Heart right ventricle (tissue), 16 donors: ENCODE measurements at regions of chr1 and their contacts with region 1.

Region 1: DNA sequence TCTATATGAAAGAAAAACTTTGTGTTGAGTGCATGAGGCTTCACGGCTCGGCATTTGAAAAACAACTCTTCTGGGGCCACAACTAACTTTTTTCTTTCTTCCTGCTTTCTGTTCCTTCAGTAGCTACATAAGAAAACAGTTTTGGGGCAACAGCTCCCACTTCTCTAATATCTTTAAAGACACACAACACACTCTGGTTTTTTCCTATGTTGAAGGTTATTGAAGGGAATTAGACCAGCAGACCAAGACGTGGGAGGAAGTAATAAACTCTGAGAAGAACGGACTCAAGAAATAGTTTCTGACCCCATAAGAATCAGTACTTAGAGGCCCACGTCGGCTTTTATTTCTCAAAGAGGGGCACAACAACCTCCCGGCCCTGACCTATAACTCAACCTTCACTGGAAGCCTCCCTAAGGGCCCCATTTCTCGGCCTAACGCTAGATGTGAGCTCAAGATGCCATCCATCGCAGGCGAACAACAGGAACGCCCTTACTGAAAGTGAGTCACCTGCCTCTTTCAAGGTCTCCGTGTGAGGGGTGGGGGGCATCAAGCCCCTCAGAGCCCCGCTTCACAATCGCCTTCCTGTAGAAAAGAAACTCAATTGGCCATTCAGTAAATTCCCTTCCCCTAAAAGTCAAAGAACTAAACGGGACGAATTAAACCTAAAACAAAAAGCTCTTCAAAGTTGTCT is 844 bp downstream of the ZMYM6 start:
- DNase-seq: peak in 1 of 2 donors; percentile 27
- ATAC-seq: peak in 7 of 8 donors; percentile 3 to 62 (median 44)
- H3K4me3 ChIP-seq: peak overlapping the region; percentile 55 to 89 (median 66)
- H3K27ac ChIP-seq: peak overlapping the region; percentile 80 to 97 (median 92)
- H3K4me1 ChIP-seq: peaks cover 0 to 27% (median 20%) of the 10 kb centered on the region in 9 donors
- H3K27me3 ChIP-seq: no peaks in the 10 kb centered on the region
- CTCF ChIP-seq: no peak

Region 2: DNA sequence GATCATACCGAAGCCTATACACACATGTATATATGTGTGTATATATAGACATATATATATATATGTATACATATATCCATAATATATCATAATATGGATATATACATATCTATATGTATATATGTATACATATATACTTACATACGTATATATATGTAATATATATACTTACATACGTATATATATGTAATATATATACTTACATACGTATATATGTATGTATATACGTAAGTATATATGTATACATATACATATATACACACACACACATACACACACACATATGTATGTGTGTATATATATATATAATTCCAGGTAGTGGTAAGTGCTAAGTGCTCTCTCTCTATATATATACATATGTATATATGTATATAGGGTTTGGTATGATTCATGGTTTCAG is 36.0 kb before region 1 on chr1:
- intact Hi-C with region 1: loop called in 1 of 10 experiments (anchors 5 kb)
- DNase-seq: no peak
- ATAC-seq: no peak
- H3K4me3 ChIP-seq: no peak overlapping the region
- H3K27ac ChIP-seq: no peak overlapping the region
- H3K4me1 ChIP-seq: no peaks in the 10 kb centered on the region
- H3K27me3 ChIP-seq: no peaks in the 10 kb centered on the region
- CTCF ChIP-seq: no peak

Region 3: DNA sequence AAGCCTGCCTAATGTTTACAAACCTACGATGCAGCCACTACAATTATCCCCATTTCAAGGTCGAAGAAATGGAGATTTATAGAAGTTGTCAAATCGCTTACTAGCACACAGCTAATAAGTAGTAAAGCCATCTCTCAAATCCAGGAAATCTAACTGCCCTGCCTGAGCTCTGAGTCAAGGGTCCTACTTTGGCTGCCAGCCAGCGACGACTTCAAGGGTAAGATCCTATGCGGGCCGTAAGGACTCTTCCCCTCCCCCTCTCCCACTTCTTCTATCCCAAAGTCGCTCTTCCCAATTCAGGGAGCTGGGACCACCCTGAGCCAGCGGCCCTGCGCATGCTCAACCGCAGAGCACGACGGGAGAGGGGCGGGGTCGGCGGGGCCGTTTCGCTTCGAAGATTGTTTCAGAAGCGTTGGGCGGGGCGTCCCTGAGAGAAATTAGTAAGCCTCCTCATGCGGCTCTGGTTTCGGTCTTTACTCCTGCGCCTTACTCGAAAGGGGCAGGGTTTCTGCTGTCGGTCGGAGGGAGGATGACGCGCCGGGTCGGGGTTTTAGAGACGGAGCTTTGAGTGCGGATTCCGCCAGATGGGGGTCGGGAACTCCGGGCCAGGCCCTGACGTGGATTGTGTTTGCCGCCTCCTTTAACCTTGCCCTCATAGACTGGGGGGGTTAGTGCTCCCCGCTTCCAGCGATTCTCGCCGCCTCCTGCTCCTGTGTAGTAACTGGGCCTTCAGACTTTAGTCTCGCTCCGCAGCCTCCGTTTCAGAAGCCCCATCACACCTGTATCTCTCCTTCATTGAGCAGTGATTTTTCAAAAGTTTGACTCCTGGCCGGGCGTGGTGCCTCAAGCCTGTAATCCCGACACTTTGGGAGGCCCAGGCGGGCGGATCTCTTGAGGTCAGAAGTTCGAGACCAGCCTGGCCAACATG is 48.4 kb after region 1 on chr1 and contains the start of gene ZMYM1:
- intact Hi-C with region 1: loop called in 2 of 10 experiments (anchors 2 to 5 kb)
- DNase-seq: peak; percentile 86 to 87
- ATAC-seq: peak; percentile 95 to 99 (median 98)
- H3K4me3 ChIP-seq: peak within 1 kb of the TSS; percentile 50 to 88 (median 77)
- H3K27ac ChIP-seq: peak within 1 kb of the TSS; percentile 41 to 93 (median 86)
- H3K4me1 ChIP-seq: peaks cover 4 to 18% (median 15%) of the 10 kb centered on the region in 9 donors
- H3K27me3 ChIP-seq: no peaks in the 10 kb centered on the region
- CTCF ChIP-seq: no peak
- total RNA-seq, gene ZMYM1: 4.2 to 11.0 (median 7.3) TPM

Region 4: DNA sequence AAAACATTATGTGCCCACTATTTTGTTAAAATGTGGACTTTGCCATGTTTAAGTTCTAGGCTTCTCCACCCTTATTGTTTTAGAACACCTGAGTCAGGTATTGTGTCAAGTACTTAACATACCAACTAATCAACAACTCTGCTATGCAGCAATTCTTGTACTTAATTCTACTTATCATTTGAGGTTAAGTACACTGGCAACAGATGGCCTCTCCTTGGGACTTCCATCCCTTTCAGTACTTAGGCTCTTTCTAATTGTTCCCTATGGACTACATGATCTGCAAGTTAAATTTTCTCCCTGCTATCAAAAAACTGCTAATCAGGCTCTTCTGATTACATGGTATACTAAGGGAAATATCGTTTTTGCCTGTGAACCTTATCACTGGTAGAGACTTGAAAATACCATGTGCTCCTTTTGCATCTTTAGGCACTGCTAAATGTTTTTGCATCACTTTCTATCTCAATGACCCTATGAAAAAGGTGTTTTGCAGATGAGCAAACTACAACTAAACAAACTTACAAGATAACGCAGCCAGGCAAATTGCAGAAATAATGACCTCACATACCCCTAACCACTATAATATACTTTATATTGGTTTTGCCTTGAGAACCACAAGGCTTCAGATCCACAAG is 143.1 kb after region 1 on chr1:
- intact Hi-C with region 1: loop called in 1 of 10 experiments (anchors 10 kb)
- DNase-seq: no peak
- ATAC-seq: no peak
- H3K4me3 ChIP-seq: no peak overlapping the region
- H3K27ac ChIP-seq: no peak overlapping the region
- H3K4me1 ChIP-seq: peaks cover 0 to 18% (median 8%) of the 10 kb centered on the region in 9 donors
- H3K27me3 ChIP-seq: no peaks in the 10 kb centered on the region
- CTCF ChIP-seq: no peak

Region 5: GRCh38 chr1:35180776-35181374 is 150.0 kb after region 1 on chr1:
- intact Hi-C with region 1: loop called in 2 of 10 experiments (anchors 10 kb)
- DNase-seq: no peak
- ATAC-seq: no peak
- H3K4me3 ChIP-seq: no peak overlapping the region
- H3K27ac ChIP-seq: no peak overlapping the region
- H3K4me1 ChIP-seq: peaks cover 3 to 75% (median 48%) of the 10 kb centered on the region in 9 donors
- H3K27me3 ChIP-seq: no peaks in the 10 kb centered on the region
- CTCF ChIP-seq: no peak